Left ventricle myocardium superior (tissue), 1 donor: ENCODE measurements at regions of chr20 and their contacts with region 1.

Region 1: DNA sequence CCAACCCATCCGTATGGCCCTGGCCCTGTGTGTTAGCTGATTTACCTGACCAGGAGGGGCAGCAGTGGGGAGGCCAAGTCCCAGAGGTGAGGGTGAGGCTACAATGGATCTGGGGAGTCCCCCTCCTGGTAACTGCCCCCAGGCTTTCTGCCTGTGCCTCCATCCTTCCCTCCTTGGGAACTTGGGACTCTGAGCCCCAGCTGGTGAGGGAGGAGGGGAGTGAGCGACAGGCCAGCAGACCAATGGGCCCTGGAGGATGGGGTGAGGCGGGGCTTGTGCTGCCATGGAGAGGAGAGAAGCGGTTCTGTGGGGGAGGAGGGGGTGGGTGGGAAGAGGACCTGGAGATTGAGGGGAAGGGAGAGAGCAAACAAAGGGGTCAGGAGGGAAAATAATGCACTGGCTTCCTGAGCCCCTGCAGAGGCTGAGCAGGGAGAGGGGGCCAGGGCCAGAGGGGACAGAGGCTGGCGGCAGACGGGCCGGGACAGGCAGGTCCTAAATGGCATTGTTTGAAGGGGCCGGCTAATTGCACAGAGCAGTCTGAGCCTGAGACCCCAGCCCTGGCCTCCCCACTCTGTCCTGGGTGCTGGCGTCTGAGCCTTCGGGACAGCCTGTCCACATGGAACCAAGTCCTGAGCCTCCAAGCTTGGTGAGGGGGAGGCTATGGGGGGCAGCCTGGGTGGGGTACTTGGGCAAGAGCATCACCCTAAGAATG is 17.5 kb downstream of the DNMT3B start:
- DNase-seq: no peak
- ATAC-seq: no peak

Region 2: DNA sequence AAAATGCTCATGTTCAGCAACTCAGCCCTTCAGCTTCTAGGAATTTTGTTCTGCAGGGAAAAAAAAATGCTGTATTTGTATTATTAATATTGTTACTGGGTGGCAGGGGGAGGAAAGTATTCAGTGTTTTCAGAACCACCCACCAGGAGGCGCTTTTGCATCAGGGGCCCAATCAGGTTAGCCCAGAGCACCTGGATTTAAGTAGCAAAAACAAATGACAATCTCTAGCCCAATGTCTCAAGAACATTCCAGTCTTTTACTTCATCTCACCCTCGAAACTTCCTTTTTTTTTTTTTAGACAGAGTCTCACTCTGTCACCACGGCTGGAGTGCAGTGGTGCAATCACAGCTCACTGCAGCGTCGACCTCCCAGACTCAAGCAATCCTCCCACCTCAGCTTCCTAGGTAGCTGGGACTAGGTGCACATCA is 105.3 kb before region 1 on chr20:
- intact Hi-C with region 1: loop called (anchors 5 kb)
- DNase-seq: no peak
- ATAC-seq: peak; percentile 34

Region 3: DNA sequence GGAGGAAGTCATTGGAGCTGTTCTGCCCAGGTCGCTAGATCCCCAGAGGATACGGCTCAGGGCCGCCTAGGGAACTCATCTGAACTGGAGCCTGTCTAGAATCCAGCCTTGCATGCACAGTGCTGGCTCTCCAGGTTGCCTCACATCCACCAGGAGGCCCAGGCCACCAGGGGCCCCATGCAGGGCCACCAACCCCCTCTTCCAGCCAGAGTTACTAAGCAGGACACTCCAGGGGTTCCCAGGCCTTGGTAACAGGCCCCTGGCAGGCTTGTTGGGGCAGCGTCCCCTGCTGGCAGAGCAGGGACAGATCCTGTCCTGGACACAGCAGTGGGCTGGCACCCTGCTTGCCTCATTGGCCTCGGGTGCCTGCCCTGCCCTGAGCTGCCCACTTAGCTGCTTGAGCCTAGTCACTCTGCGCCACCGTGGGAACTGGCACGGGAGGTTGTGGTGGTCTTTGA is 114.4 kb after region 1 on chr20:
- intact Hi-C with region 1: no loop called
- DNase-seq: no peak
- ATAC-seq: peak; percentile 53